ENCODE measurements at regions of chr2 and their contacts with region 1.

Region 1: DNA sequence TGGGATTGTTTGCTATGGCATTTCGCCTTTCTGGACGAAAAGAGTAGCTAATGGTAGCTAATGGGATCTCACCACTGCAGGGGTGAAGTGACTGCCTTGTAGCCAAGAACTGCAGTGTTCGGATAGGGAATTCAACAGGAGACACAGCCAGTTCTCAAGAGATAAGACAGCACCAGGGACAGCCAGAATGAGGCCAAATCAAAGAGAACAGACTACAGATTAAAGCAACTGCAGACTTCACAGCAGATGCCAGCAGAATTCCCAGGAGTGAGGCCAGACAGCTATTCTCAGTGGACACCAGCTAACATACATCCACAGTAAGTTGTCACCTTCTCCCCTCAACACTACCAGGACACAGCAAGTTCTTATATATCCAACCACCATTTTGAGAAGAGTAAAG is 124.0 kb downstream of the PLA2R1 start:
- DNase-seq: no peak
- H3K4me3 ChIP-seq: no peak overlapping the region
- H3K27ac ChIP-seq: no peak overlapping the region
- H3K4me1 ChIP-seq: no peaks in the 10 kb centered on the region
- H3K27me3 ChIP-seq: no peaks in the 10 kb centered on the region
- CTCF ChIP-seq: no peak
- POLR2A ChIP-seq: no peak

Region 2: DNA sequence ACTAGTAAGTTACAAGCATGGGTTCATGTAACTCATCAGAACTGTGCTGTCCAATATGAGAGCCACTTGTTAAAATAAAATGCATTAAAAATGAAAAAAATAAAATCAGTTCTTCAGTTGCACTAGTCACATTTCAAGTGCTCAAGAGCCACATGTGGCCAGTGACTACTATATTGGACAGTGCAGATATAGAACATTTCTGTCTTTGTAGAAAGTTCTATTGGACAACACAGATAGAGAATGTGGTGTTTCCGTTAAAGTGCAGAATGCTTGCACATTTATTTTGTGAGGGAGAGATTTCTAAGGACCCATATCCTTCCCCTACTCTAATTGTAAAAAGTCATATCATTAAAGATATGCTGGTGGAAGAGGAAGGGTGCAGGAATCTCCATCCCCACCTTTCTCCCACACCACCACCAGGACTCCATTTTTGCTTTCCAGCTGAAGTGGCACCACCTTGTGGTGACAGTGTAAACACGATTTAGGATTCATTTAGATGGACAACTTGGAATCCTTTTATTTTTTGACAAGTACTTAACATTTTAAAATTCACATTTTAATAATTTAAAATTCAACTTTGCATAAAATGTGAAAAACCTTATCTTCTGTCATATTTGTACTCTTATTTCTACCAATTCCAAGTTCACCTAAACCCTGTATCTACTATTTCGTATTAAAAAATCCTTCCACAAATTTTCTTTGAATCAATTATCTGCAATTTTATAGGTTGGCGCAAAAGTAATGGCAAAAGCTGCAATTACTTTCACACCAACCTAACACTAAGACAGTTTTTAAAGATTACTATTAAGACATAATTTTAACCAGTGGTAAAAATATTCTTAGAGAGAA is 131.0 kb before region 1 on chr2:
- intact Hi-C with region 1: no loop called
- DNase-seq: no peak
- H3K4me3 ChIP-seq: no peak overlapping the region
- H3K27ac ChIP-seq: no peak overlapping the region
- H3K4me1 ChIP-seq: no peaks in the 10 kb centered on the region
- H3K27me3 ChIP-seq: no peaks in the 10 kb centered on the region
- CTCF ChIP-seq: peak; percentile 17 to 75 (median 58)
- POLR2A ChIP-seq: no peak

Region 3: DNA sequence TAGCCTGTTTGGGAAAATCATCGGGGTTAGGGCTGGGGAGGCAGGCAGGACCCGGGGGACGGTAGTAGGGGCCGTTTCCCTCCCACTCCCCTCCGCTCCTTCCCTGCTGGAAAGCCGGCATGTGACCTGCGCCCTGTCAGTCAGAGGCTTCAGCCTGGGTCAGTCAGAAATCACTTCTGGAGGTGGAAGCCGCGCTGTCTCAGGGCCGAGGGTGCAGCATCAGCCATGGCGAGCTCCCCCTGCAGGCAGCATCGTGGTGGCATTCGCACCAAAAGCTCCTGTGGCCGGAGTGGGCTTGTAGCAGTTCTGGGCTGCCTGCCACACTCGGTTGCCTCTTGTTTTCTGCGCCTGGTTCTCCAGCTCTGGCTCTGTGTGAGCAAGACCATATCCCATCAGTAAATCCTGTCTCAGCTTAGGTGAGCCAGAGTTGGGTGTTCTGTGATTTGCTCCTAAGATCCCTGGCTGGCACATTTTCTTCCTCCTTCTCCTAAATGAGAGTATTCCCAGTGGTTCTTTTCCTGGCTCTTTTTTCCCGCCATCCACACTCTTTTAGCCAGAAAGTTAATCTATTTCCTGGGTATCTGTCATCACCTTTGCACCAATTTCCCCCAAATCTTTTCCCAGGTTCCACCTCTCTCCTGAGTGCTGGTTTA is 16.5 kb before region 1 on chr2:
- intact Hi-C with region 1: loop called (anchors 1 kb)
- DNase-seq: peak; percentile 34 to 67
- H3K4me3 ChIP-seq: no peak overlapping the region
- H3K27ac ChIP-seq: no peak overlapping the region
- H3K4me1 ChIP-seq: no peaks in the 10 kb centered on the region
- H3K27me3 ChIP-seq: no peaks in the 10 kb centered on the region
- CTCF ChIP-seq: peak in 2 of 3 donors; percentile 28 to 42
- POLR2A ChIP-seq: no peak